GM10248 (cell line): ENCODE measurements at regions of chr1 and their contacts with region 1.

Region 1: DNA sequence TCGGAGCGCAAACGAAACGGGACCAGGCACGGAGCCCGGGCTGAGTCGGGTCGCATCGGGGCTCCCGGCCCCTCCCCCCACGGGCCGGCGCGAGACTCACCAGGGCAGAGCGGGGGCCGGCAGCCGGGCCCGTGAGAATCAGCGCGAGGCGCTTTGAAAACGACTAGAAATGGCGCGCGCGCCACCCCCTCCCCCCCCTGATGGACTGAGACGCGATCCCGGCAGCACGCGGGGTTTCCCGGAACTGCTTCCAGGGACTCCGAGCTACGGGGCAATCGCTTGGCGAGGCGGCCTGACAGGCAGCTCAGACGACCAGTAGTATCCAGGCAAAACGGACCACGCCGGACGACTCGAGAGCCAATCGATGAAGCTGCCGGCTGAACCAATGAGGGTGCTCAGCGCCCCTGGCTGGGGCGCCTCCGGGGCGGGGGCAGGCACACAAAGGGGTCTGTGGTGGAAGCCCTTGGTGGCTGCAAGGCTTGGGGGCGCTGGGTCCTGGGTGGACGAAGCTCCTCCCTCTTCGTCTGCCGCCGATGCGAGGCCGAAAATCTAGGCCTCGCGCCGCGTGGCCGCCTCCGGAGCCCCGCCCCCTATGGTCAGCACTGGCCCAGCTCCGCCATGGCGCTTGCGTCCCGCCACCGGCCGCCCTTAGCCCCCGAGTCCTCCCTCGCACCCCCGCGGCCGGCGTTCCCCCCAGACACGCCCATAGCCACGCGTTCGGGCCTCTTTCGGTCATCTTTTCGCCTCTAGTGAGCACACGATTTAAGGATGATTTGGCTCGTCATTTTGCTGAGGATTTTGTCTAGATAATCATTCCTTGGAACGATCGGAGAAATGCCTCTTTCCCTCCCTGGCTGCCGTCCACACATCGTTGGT is at the start of gene HNRNPR:
- DNase-seq: peak; percentile 100
- CTCF ChIP-seq: no peak

Region 2: GRCh38 chr1:23357138-23357908 is 13.0 kb after region 1 on chr1:
- CTCF ChIA-PET with region 1: interaction called, 11 read pairs
- POLR2A ChIA-PET with region 1: interaction called, 3 read pairs
- DNase-seq: no peak
- CTCF ChIP-seq: no peak

Region 3: DNA sequence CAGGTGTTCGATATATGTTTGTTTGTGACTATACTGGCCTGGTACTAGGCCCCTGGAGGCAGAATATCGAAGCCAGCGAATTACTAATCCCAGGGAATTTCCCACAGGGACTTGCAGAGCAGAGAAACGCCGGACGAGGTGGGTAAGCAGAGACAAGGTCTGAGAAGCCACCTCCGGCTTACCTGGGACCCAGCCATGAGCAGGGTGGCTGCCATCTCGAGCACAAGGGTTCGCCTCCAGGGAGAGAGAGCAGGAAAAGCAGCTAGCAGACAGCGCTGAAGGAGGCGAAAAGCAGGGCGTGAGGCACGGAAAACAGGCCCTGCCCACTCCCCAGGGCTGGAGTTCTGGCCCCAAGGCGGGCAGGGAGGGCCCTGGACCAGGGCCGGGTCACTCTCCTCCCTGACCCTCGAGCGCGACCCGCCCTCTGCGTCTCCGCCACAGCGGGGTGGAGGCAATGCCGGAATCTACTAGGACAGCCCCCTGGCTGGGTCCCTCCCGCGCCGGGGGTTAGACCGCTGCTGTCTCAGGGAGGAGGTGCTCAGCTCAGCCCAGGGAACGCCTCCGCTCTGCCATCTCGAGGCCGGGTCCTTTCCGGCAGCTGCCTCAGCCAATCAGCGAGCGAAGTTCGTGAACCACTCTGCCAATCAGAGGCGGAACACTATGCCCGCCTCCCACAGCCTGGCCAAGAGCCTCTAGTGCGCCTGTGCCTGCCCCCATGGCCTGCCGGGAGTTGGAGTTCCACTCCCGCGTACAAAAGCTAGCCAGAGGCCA is 23.6 kb after region 1 on chr1:
- CTCF ChIA-PET with region 1: interaction called, 10 read pairs
- POLR2A ChIA-PET with region 1: interaction called, 11 read pairs
- DNase-seq: peak; percentile 100
- CTCF ChIP-seq: no peak

Region 4: DNA sequence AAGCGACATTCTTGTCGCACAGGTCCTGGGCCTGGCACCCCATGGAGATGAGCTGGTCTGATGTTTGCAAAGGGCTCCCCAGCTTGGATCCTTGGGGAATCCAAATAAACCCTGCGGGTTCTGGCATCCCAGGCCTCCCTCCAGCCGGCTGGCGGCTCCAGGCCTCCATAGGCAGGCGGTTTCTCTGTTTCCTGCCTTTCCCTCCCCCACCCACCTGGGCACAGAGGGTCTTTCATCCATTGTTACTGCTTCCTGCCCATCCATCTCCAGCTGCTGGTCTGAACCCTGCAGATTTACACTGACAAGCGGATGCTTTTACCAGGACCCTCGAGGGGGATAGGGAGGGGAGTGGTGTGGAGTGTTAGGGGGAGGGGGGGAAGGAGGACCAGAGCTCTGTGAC is 254.1 kb after region 1 on chr1:
- CTCF ChIA-PET with region 1: no interaction called
- POLR2A ChIA-PET with region 1: no interaction called
- DNase-seq: no peak
- CTCF ChIP-seq: no peak

Region 5: GRCh38 chr1:23854568-23854967 is 510.2 kb after region 1 on chr1:
- CTCF ChIA-PET with region 1: no interaction called
- POLR2A ChIA-PET with region 1: no interaction called
- DNase-seq: no peak
- CTCF ChIP-seq: no peak